ENCODE measurements at regions of chr7 and their contacts with region 1.

Region 1: DNA sequence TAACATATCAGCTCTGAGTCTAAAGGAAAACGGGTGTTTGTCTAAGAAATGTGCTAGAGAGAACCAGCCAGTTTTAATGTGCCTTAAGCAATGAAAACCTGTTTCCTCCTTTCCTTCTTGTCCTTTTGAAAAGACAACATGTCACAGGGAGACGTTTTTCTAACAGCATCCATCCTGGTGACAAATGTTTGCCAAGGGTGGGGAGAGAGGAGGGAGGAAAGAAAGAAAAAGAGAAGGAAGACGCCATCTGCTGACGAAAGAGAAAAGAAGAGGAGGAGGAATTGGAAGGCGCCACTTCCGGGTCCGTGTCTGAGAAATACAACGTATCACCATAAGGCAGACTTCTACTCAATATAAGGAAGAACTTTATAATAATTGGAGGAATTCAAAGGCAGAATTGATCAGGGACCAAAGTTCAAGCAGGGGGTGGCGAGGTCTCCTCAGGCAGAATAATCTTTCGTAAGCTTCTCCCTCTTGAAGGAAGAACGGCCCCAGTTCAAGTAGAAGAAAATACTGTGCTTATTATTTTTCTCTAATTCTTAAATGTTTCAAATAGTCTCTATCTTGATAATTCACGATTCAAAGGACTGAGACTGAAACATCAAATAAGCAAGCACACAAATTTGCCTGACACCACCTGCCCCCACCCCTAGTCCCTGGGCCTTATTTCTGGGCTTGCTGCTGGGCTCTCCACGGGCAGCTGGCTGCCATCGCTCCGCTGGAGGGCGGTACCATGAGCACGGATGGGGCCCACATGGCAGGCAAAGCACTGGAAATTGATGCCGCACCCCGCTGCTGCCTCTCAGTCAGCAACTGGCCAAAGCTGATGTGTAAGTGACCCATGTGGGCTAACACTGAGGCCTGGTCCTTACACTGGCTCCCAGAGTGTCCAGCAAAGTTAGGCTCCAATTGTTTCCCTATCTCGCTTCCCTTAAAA is 273.7 kb upstream of the KLF14 start:
- DNase-seq: peak; percentile 73
- H3K4me3 ChIP-seq: no peak overlapping the region
- H3K27ac ChIP-seq: peak overlapping the region; percentile 66
- H3K4me1 ChIP-seq: peaks cover 36% of the 10 kb centered on the region
- H3K27me3 ChIP-seq: no peaks in the 10 kb centered on the region
- CTCF ChIP-seq: peak; percentile 37 to 67

Region 2: GRCh38 chr7:130649004-130649790 is 358.5 kb before region 1 on chr7:
- CTCF ChIA-PET with region 1: no interaction called
- dilution Hi-C with region 1: no loop called
- in situ Hi-C with region 1: no loop called
- intact Hi-C with region 1: no loop called
- DNase-seq: peak; percentile 37
- H3K4me3 ChIP-seq: no peak overlapping the region
- H3K27ac ChIP-seq: no peak overlapping the region
- H3K4me1 ChIP-seq: no peaks in the 10 kb centered on the region
- H3K27me3 ChIP-seq: no peaks in the 10 kb centered on the region
- CTCF ChIP-seq: no peak

Region 3: DNA sequence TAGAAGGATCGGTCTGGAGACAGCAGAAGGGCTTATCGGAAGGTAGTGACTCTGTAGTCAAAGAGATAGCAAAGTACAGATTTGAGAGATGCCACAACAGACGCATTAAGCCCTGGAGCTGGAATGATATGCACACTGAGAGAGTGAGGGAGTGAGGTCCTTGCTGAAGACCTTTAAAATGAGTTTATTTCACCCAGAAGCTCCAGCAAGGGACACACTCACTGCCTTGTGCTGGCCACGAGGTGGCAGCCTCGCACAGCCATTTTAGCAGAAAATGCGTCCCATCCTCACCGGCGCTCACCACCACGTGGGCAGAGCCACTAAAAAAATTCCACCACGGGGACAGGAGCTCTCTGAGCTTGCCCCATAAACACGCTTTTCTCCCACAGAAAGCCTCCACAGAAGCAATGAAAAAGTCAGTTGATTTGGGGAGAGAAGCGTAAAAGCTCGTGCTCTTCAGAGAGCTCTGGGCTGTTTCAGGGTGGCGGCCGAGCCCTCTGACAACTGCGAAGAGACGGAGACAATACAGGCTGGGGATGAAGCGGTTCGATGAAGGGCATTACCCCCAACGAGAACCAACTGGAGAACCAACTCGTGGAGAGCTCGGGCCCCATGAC is 110.7 kb before region 1 on chr7:
- CTCF ChIA-PET with region 1: interaction called, 4 read pairs
- dilution Hi-C with region 1: no loop called
- in situ Hi-C with region 1: no loop called
- intact Hi-C with region 1: loop called (anchors 1 kb)
- DNase-seq: no peak
- H3K4me3 ChIP-seq: no peak overlapping the region
- H3K27ac ChIP-seq: no peak overlapping the region
- H3K4me1 ChIP-seq: peaks cover 83% of the 10 kb centered on the region
- H3K27me3 ChIP-seq: no peaks in the 10 kb centered on the region
- CTCF ChIP-seq: peak; percentile 76 to 80

Region 4: GRCh38 chr7:130904031-130904757 is 103.5 kb before region 1 on chr7:
- CTCF ChIA-PET with region 1: no interaction called
- dilution Hi-C with region 1: no loop called
- in situ Hi-C with region 1: no loop called
- intact Hi-C with region 1: loop called (anchors 2 kb)
- DNase-seq: peak; percentile 95
- H3K4me3 ChIP-seq: no peak overlapping the region
- H3K27ac ChIP-seq: peak overlapping the region; percentile 98
- H3K4me1 ChIP-seq: peaks cover 75% of the 10 kb centered on the region
- H3K27me3 ChIP-seq: no peaks in the 10 kb centered on the region
- CTCF ChIP-seq: no peak

Region 5: DNA sequence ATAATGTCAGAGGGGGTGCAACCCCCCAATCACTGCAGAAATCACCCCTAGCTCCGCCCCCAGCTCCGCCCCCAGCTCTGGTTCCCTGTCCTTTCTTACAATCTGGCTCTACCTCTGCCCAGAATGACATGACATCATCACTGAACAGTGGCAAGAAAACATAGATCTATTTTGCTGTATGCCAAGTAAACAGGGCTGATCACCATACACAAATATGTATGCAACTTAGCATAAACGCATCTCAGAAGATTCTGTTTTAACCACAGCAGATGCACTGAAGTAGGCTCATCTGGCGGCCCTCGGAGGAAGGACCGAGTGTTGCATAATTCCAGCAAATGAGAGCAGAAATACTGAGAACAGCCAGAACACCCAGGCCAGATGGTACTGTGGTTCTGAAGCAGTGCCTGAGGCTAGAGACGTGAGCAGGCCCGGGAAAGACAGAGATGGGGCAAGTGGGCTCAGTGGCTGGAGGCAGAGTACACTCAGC is 19.7 kb after region 1 on chr7:
- CTCF ChIA-PET with region 1: no interaction called
- dilution Hi-C with region 1: no loop called
- in situ Hi-C with region 1: no loop called
- intact Hi-C with region 1: loop called (anchors 2 kb)
- DNase-seq: peak; percentile 63
- H3K4me3 ChIP-seq: no peak overlapping the region
- H3K27ac ChIP-seq: peak overlapping the region; percentile 89
- H3K4me1 ChIP-seq: peaks cover 20% of the 10 kb centered on the region
- H3K27me3 ChIP-seq: no peaks in the 10 kb centered on the region
- CTCF ChIP-seq: no peak

Region 6: GRCh38 chr7:131087756-131088658 is 80.3 kb after region 1 on chr7:
- CTCF ChIA-PET with region 1: no interaction called
- dilution Hi-C with region 1: no loop called
- in situ Hi-C with region 1: no loop called
- intact Hi-C with region 1: no loop called
- DNase-seq: no peak
- H3K4me3 ChIP-seq: no peak overlapping the region
- H3K27ac ChIP-seq: no peak overlapping the region
- H3K4me1 ChIP-seq: no peaks in the 10 kb centered on the region
- H3K27me3 ChIP-seq: no peaks in the 10 kb centered on the region
- CTCF ChIP-seq: no peak

Region 7: DNA sequence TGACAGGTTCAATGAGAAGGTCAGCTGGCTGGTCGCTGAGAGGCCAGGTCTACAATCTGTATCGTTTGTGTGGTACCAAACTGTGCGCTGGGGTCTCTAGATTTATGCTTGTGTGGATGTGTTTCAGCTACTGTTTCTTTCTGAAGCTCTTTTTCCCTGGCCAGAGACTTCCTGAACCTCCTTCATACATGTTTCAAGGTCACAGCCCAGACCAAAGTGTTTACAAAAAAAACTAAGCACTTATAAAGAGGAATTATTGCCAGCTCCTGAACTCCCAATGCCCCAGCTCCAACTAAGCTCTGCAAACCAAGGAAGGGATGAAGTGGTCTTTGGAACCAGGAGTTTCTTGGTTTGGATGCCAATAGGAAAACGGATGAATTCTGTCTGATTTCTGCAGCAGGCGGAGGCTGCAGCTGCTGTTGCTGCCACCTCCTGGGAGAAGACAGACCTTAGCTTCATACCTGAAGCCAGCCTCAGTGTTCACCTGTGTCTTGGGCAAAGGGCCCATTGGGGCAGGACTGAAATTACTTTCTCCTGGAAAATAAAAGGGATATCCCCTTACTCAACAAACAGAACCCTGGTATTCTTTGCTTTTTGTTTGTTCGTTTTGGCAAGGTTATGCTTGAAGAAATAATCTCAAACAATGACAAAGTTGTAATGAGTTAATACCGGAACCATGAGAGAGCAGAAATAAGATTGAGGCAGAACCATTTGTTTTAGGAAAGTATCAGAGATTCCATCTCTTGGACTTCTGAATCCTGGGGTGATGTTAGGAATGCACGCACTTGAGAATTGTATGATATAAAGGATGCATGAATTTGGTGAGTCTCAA is 295.4 kb after region 1 on chr7:
- CTCF ChIA-PET with region 1: no interaction called
- dilution Hi-C with region 1: no loop called
- in situ Hi-C with region 1: no loop called
- intact Hi-C with region 1: no loop called
- DNase-seq: peak; percentile 38
- H3K4me3 ChIP-seq: no peak overlapping the region
- H3K27ac ChIP-seq: no peak overlapping the region
- H3K4me1 ChIP-seq: no peaks in the 10 kb centered on the region
- H3K27me3 ChIP-seq: no peaks in the 10 kb centered on the region
- CTCF ChIP-seq: peak; percentile 73 to 86

Region 8: GRCh38 chr7:131370523-131370968 is 362.9 kb after region 1 on chr7:
- CTCF ChIA-PET with region 1: no interaction called
- dilution Hi-C with region 1: no loop called
- in situ Hi-C with region 1: no loop called
- intact Hi-C with region 1: no loop called
- DNase-seq: peak; percentile 37
- H3K4me3 ChIP-seq: no peak overlapping the region
- H3K27ac ChIP-seq: no peak overlapping the region
- H3K4me1 ChIP-seq: peaks cover 7% of the 10 kb centered on the region
- H3K27me3 ChIP-seq: no peaks in the 10 kb centered on the region
- CTCF ChIP-seq: no peak

Measured in mammary epithelial cell (primary cell).